B cell (primary cell): ENCODE measurements at regions of chr1 and their contacts with region 1.

Region 1: DNA sequence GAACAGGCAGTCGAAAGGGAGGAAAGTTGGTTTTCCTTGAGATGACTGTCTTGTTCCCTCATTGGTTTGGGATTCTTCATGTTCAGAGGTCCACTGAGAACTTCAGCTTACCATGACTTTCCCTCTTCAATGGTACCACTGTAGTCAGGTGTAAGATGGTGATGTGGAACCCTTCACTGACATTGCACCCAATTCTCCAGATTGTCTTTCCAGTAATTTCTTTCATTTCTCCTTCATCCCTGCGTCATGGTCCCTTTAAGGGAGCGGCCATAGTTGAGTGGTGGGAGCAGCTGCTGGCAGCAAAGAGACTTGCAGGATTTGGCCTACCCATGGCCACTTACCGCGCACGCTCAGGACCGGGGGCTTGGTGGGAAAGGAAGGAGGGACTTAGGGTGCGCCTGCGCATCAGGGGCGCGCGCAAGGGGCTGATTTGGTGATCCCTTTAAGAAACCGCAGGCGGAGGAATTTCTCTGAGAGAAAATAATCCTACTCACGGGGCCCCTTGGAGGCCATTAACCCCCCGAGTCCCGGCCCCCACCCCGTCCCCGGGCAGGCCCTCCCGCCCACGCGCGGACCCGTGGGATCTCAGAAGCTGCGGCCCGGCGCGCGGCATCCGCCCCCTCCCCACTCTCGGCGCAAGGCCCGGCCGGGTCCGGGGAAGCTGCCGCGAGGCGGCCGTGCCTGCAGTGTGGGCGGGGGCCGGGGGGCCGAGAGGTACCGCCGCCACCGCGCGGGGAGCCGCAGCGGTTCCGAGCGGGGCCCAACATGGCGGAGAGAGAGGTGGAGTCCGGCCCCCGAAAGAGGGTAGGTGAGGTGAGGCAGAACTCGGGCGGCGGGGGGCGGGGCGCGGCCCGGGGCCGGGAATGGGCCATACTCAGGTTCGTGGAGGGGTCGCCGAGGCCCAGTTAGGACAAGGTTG is at the start of gene ZMYM4:
- DNase-seq: peak; percentile 94
- ATAC-seq: peak; percentile 90
- H3K4me3 ChIP-seq: peak within 1 kb of the TSS; percentile 34 to 88 (median 71)
- H3K4me3 Mint-ChIP-seq: peak within 1 kb of the TSS; percentile 87
- H3K27ac ChIP-seq: peak within 1 kb of the TSS; percentile 21 to 90
- H3K27ac Mint-ChIP-seq: peak within 1 kb of the TSS; percentile 89
- H3K4me1 ChIP-seq: peaks cover 14 to 15% of the 10 kb centered on the region in 2 donors
- H3K4me1 Mint-ChIP-seq: peaks cover 28% of the 10 kb centered on the region
- H3K27me3 ChIP-seq: peaks cover 0 to 3% (median under 1%) of the 10 kb centered on the region in 4 experiments
- H3K27me3 Mint-ChIP-seq: peaks cover 17% of the 10 kb centered on the region
- CTCF ChIP-seq: no peak
- total RNA-seq, gene ZMYM4: 44.8 and 45.2 TPM in 2 replicates

Region 2: DNA sequence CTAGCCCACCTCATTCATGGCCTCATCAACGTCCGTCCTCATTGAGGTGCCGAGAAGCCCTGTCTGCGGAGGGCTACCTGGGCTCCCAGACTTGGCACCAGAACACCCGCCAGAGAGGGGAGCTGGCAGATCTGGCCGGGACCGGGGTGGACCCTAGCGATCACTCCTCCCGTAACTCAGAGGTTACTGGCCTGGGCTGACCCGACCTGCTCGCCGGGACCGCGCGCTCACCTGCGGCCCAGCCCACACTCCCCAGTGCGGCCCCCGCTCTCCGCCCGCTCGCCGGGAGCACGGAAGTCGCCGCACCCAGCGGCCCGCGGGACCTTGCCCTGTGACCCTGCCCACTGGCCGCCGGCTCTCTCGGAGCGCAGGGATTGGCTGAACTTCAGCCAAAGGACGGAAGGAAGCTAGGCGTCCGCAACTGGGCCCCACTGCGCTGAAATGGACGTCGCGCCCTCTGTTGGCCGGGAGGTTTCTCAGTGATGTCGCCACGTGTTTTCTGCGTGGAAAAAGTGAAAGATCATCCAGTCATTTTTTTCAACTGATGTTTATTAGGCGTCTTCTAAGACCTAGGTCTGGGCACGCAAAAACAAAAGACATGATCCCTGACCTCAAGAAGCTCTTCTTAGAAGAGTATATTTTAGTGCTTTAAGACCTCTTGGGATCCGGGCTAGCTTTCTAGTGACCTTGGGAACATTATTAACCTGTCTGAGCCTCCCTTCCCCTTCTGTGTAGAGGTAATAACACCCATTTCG is 408.9 kb before region 1 on chr1 and contains the start of gene SMIM12:
- CTCF ChIA-PET with region 1: interaction called, 3 read pairs
- POLR2A ChIA-PET with region 1: no interaction called
- intact Hi-C with region 1: loop called (anchors 1 kb)
- DNase-seq: peak; percentile 91
- ATAC-seq: peak; percentile 99
- H3K4me3 ChIP-seq: peak within 1 kb of the TSS; percentile 60 to 90 (median 82)
- H3K4me3 Mint-ChIP-seq: peak within 1 kb of the TSS; percentile 95
- H3K27ac ChIP-seq: peak within 1 kb of the TSS; percentile 55 to 81
- H3K27ac Mint-ChIP-seq: peak within 1 kb of the TSS; percentile 93
- H3K4me1 ChIP-seq: peaks cover 20 to 29% of the 10 kb centered on the region in 2 donors
- H3K4me1 Mint-ChIP-seq: peaks cover 47% of the 10 kb centered on the region
- H3K27me3 ChIP-seq: no peaks in the 10 kb centered on the region
- H3K27me3 Mint-ChIP-seq: no peaks in the 10 kb centered on the region
- CTCF ChIP-seq: peak; percentile 91
- total RNA-seq, gene SMIM12: 33.1 and 39.8 TPM in 2 replicates

Region 3: DNA sequence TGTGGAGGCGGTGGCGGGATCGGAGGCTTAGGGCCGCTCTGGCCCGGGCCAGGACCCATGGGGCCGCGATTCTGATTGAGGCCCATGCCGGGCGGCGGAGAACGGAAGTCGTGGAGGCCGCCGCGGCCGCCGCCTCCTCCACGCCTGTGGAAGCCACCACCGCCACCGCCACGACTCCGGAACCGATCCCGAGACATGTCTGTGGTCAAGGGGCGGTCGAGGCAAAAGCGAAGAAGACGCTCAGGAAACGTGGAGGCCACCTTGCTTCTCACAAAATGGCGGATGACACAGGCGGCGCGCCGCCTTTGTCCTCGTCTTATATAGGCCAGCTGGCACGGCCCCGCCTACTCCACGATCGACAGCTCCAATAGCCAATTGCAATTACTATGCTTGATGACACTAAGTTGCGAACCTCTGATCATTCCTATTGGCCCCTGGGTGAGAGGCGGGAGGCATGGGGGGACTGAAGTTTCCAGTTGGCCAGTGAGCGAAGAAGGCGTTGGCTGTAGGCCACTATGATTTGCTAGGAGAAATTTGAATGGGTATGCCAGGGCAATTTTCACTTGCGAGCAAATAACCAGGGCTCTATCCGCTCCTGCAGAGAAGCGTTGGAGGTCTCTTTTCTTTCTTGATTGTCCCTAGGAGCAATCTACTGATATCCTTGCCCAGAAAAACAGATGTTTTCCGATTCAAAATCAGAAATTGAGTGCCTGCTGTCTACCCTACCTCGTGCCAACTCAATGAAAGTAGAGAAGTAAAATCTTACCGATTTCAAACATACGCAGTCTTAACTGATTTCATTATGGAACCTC is 75.5 kb before region 1 on chr1 and contains the start of gene SFPQ:
- CTCF ChIA-PET with region 1: no interaction called
- POLR2A ChIA-PET with region 1: no interaction called
- intact Hi-C with region 1: loop called (anchors 1 kb)
- DNase-seq: peak; percentile 99
- ATAC-seq: peak; percentile 91
- H3K4me3 ChIP-seq: peak within 1 kb of the TSS; percentile 75 to 97 (median 88)
- H3K4me3 Mint-ChIP-seq: peak within 1 kb of the TSS; percentile 97
- H3K27ac ChIP-seq: peak within 1 kb of the TSS; percentile 95 to 96
- H3K27ac Mint-ChIP-seq: peak within 1 kb of the TSS; percentile 100
- H3K4me1 ChIP-seq: peaks cover 24 to 29% of the 10 kb centered on the region in 2 donors
- H3K4me1 Mint-ChIP-seq: peaks cover 43% of the 10 kb centered on the region
- H3K27me3 ChIP-seq: no peaks in the 10 kb centered on the region
- H3K27me3 Mint-ChIP-seq: no peaks in the 10 kb centered on the region
- CTCF ChIP-seq: no peak
- total RNA-seq, gene SFPQ: 411 and 412 TPM in 2 replicates

Region 4: GRCh38 chr1:35220976-35221375 is 47.6 kb before region 1 on chr1:
- CTCF ChIA-PET with region 1: no interaction called
- POLR2A ChIA-PET with region 1: no interaction called
- intact Hi-C with region 1: no loop called
- DNase-seq: peak; percentile 18
- ATAC-seq: peak; percentile 33
- H3K4me3 ChIP-seq: no peak overlapping the region
- H3K4me3 Mint-ChIP-seq: no peak overlapping the region
- H3K27ac ChIP-seq: no peak overlapping the region
- H3K27ac Mint-ChIP-seq: no peak overlapping the region
- H3K4me1 ChIP-seq: no peaks in the 10 kb centered on the region
- H3K4me1 Mint-ChIP-seq: no peaks in the 10 kb centered on the region
- H3K27me3 ChIP-seq: no peaks in the 10 kb centered on the region
- H3K27me3 Mint-ChIP-seq: no peaks in the 10 kb centered on the region
- CTCF ChIP-seq: peak; percentile 61

Region 5: DNA sequence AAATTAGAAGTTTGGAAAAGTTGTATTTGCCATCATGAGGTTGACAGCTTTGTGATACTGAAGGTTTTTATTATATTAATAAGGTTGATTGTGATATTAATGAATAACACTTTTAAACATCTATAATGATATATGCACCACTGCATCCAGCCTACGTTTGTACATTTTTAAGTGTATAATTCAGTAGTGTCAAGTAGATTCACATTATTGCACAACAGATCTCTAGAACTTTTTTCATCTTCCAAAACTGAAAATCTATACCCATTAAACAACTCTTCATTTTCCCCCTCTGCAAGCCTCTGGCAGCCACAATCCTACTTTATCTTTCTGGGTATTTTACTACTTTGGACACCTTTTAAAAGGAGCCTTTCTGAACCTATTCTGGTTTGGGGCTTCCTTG is 37.3 kb before region 1 on chr1:
- CTCF ChIA-PET with region 1: no interaction called
- POLR2A ChIA-PET with region 1: no interaction called
- intact Hi-C with region 1: no loop called
- DNase-seq: no peak
- ATAC-seq: no peak
- H3K4me3 ChIP-seq: no peak overlapping the region
- H3K4me3 Mint-ChIP-seq: no peak overlapping the region
- H3K27ac ChIP-seq: no peak overlapping the region
- H3K27ac Mint-ChIP-seq: no peak overlapping the region
- H3K4me1 ChIP-seq: no peaks in the 10 kb centered on the region
- H3K4me1 Mint-ChIP-seq: no peaks in the 10 kb centered on the region
- H3K27me3 ChIP-seq: no peaks in the 10 kb centered on the region
- H3K27me3 Mint-ChIP-seq: peaks cover 5% of the 10 kb centered on the region
- CTCF ChIP-seq: no peak